ENCODE measurements at regions of chr18 and their contacts with region 1.

Region 1: GRCh38 chr18:77650799-77651385 is 401.2 kb downstream of the GALR1 start:
- DNase-seq: peak; percentile 60
- ATAC-seq: peak; percentile 82
- H3K4me3 Mint-ChIP-seq: no peak overlapping the region
- H3K27ac Mint-ChIP-seq: no peak overlapping the region
- H3K4me1 Mint-ChIP-seq: peaks cover 2% of the 10 kb centered on the region
- H3K27me3 Mint-ChIP-seq: peaks cover 14% of the 10 kb centered on the region
- CTCF ChIP-seq: peak; percentile 88

Region 2: GRCh38 chr18:76991021-76991688 is 659.7 kb before region 1 on chr18:
- CTCF ChIA-PET with region 1: no interaction called
- POLR2A ChIA-PET with region 1: no interaction called
- intact Hi-C with region 1: loop called (anchors 10 kb)
- DNase-seq: no peak
- ATAC-seq: no peak
- H3K4me3 Mint-ChIP-seq: no peak overlapping the region
- H3K27ac Mint-ChIP-seq: no peak overlapping the region
- H3K4me1 Mint-ChIP-seq: no peaks in the 10 kb centered on the region
- H3K27me3 Mint-ChIP-seq: no peaks in the 10 kb centered on the region
- CTCF ChIP-seq: no peak

Region 3: GRCh38 chr18:77711096-77711495 is 60.2 kb after region 1 on chr18:
- CTCF ChIA-PET with region 1: no interaction called
- POLR2A ChIA-PET with region 1: no interaction called
- intact Hi-C with region 1: no loop called
- DNase-seq: no peak
- ATAC-seq: no peak
- H3K4me3 Mint-ChIP-seq: no peak overlapping the region
- H3K27ac Mint-ChIP-seq: no peak overlapping the region
- H3K4me1 Mint-ChIP-seq: no peaks in the 10 kb centered on the region
- H3K27me3 Mint-ChIP-seq: peaks cover 4% of the 10 kb centered on the region
- CTCF ChIP-seq: peak; percentile 37

Region 4: GRCh38 chr18:77896586-77897252 is 245.8 kb after region 1 on chr18:
- CTCF ChIA-PET with region 1: no interaction called
- POLR2A ChIA-PET with region 1: no interaction called
- intact Hi-C with region 1: no loop called
- DNase-seq: no peak
- ATAC-seq: no peak
- H3K4me3 Mint-ChIP-seq: no peak overlapping the region
- H3K27ac Mint-ChIP-seq: no peak overlapping the region
- H3K4me1 Mint-ChIP-seq: peaks cover 5% of the 10 kb centered on the region
- H3K27me3 Mint-ChIP-seq: peaks cover 24% of the 10 kb centered on the region
- CTCF ChIP-seq: no peak

Measured in activated CD8-positive, alpha-beta T cell treated with anti-CD3 and anti-CD28 coated beads for 36 hours (primary cell).